ENCODE measurements at regions of chr4 and their contacts with region 1.

Region 1: GRCh38 chr4:168831919-168832762 is 177.9 kb downstream of the CBR4 start:
- DNase-seq: peak; percentile 66 to 80
- ATAC-seq: peak; percentile 82 to 90 (median 88)
- H3K4me3 ChIP-seq: peak overlapping the region; percentile 55 to 85 (median 78)
- H3K27ac ChIP-seq: peak overlapping the region; percentile 82 to 92 (median 90)
- H3K4me1 ChIP-seq: peaks cover 5 to 61% (median 45%) of the 10 kb centered on the region in 9 donors
- H3K27me3 ChIP-seq: peaks cover 0 to 51% (median 0%) of the 10 kb centered on the region in 7 donors
- CTCF ChIP-seq: no peak

Region 2: DNA sequence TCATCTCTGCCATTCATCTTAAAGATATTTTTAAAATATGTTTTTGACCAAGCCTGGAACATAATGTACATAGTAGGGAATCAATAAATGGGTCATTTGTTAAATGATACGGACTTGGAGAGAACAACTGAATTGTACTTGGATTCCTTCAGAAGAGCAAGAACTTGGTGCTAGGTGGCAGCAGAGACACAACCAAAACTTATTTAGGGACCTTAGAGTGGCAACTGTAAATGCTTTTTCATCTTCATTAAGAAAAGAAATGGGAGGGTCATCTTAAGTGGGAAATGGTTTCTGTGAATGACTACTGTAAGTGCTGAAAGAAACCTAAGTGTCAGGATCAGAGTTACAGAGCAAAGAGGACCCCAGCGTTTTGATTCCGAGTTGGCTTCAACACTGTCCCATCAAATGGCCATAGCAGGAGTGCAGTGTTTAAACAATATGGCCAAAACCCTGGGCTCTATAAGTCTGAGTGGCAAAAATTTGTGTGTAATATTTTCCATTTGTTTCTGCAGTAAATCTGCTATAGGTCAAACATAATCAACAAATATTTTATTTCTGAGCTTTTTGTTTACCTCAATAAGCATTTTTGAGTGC is 121.7 kb before region 1 on chr4:
- intact Hi-C with region 1: loop called in 2 of 10 experiments (anchors 2 to 10 kb)
- DNase-seq: peak in 1 of 2 donors; percentile 36
- ATAC-seq: peak in 7 of 8 donors; percentile 49 to 78 (median 65)
- H3K4me3 ChIP-seq: no peak overlapping the region
- H3K27ac ChIP-seq: peak overlapping the region in 6 of 10 donors; percentile 44 to 77 (median 62)
- H3K4me1 ChIP-seq: peaks cover 8 to 30% (median 22%) of the 10 kb centered on the region in 9 donors
- H3K27me3 ChIP-seq: no peaks in the 10 kb centered on the region
- CTCF ChIP-seq: peak; percentile 30 to 76 (median 61)

Region 3: GRCh38 chr4:168717847-168718246 is 114.3 kb before region 1 on chr4:
- intact Hi-C with region 1: loop called in 2 of 10 experiments (anchors 2 to 10 kb)
- DNase-seq: peak in 1 of 2 donors; percentile 42
- ATAC-seq: peak; percentile 70 to 93 (median 86)
- H3K4me3 ChIP-seq: no peak overlapping the region
- H3K27ac ChIP-seq: peak overlapping the region in 9 of 10 donors; percentile 7 to 79 (median 61)
- H3K4me1 ChIP-seq: peaks cover 0 to 45% (median 31%) of the 10 kb centered on the region in 9 donors
- H3K27me3 ChIP-seq: no peaks in the 10 kb centered on the region
- CTCF ChIP-seq: no peak

Region 4: DNA sequence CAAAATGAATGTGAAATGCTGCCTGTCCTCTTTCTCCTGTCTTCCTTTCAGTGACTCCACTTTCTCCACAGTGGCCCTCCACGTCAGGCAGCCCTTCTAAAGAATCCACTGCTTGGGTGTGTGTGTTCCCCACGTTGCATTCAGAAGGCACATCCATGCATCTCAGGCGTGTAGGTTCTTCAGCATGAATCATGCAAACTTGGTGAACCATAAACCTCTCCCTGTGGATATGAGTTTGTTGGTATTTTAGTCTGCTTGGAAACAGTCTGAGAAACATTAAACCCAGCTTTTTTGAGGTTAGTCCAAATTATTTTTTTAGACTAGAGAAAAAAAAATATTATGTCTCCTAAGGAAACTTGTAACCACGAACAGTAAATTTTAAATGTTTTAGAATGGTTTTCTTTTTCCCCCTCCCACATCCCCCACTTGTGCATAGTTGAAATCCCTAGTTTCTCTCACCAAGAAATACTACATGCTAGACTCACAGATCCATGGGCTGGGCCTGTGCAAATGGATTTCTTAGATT is 73.7 kb before region 1 on chr4:
- intact Hi-C with region 1: no loop called
- DNase-seq: no peak
- ATAC-seq: peak in 1 of 8 donors; percentile 7
- H3K4me3 ChIP-seq: no peak overlapping the region
- H3K27ac ChIP-seq: peak overlapping the region in 4 of 10 donors; percentile 20 to 62 (median 26)
- H3K4me1 ChIP-seq: peaks cover 0 to 15% (median 6%) of the 10 kb centered on the region in 9 donors
- H3K27me3 ChIP-seq: no peaks in the 10 kb centered on the region
- CTCF ChIP-seq: no peak

Region 5: GRCh38 chr4:168815379-168816345 is 16.5 kb before region 1 on chr4:
- intact Hi-C with region 1: loop called in 1 of 10 experiments (anchors 1 kb)
- DNase-seq: no peak
- ATAC-seq: peak in 1 of 8 donors; percentile 36
- H3K4me3 ChIP-seq: no peak overlapping the region
- H3K27ac ChIP-seq: peak overlapping the region; percentile 2 to 87 (median 78)
- H3K4me1 ChIP-seq: peaks cover 0 to 64% (median 34%) of the 10 kb centered on the region in 9 donors
- H3K27me3 ChIP-seq: no peaks in the 10 kb centered on the region
- CTCF ChIP-seq: no peak

Region 6: GRCh38 chr4:168864821-168865541 is 32.8 kb after region 1 on chr4:
- intact Hi-C with region 1: loop called in 1 of 10 experiments (anchors 5 kb)
- DNase-seq: no peak
- ATAC-seq: peak in 3 of 8 donors; percentile 22 to 44 (median 41)
- H3K4me3 ChIP-seq: no peak overlapping the region
- H3K27ac ChIP-seq: peak overlapping the region in 3 of 10 donors; percentile 12 to 32 (median 28)
- H3K4me1 ChIP-seq: peaks cover 0 to 86% (median 49%) of the 10 kb centered on the region in 9 donors
- H3K27me3 ChIP-seq: no peaks in the 10 kb centered on the region
- CTCF ChIP-seq: peak in 5 of 9 donors; percentile 18 to 51 (median 39)

Region 7: DNA sequence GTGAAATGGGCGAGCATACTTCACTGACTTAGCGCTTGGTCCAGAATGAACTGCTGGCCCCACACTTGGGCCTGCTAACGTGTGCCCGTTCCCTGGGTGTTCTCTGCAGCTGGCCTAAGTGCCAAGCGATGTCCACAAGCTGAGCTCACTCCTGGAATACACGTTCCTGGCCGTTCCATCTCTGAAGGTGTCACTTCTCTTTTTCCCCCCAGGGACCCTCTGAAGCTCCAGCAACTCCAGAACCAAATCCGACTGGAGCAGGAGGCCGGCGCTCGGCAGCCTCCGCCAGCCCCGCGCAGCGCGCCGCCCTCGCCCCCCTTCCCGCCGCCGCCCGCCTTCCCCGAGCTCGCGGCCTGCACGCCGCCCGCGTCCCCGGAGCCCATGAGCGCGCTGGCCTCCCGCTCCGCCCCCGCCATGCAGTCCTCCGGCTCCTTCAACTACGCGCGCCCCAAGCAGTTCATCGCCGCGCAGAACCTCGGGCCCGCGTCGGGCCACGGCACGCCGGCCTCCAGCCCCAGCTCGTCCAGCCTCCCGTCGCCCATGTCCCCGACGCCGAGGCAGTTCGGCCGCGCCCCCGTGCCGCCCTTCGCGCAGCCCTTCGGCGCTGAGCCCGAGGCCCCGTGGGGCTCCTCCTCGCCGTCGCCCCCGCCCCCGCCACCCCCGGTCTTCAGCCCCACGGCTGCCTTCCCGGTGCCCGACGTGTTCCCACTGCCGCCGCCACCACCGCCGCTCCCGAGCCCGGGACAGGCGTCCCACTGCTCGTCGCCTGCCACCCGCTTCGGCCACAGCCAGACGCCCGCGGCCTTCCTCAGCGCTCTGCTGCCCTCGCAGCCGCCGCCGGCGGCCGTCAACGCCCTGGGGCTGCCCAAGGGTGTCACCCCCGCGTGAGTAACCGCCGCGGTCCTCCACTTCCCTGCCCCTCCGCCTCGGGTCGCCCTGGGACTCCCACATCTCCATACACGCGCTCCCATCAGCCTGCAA is 45.7 kb after region 1 on chr4:
- intact Hi-C with region 1: loop called in 1 of 10 experiments (anchors 5 kb)
- DNase-seq: peak; percentile 36 to 64
- ATAC-seq: peak; percentile 54 to 91 (median 62)
- H3K4me3 ChIP-seq: peak overlapping the region in 9 of 10 donors; percentile 31 to 58 (median 49)
- H3K27ac ChIP-seq: peak overlapping the region; percentile 33 to 81 (median 68)
- H3K4me1 ChIP-seq: peaks cover 0 to 67% (median 46%) of the 10 kb centered on the region in 9 donors
- H3K27me3 ChIP-seq: peaks cover 0 to 25% (median 0%) of the 10 kb centered on the region in 7 donors
- CTCF ChIP-seq: peak in 1 of 9 donors; percentile 13

Region 8: GRCh38 chr4:168917138-168917779 is 85.1 kb after region 1 on chr4:
- intact Hi-C with region 1: loop called in 2 of 10 experiments (anchors 5 to 10 kb)
- DNase-seq: no peak
- ATAC-seq: peak in 1 of 8 donors; percentile 28
- H3K4me3 ChIP-seq: no peak overlapping the region
- H3K27ac ChIP-seq: peak overlapping the region in 1 of 10 donors; percentile 20
- H3K4me1 ChIP-seq: peaks cover 0 to 28% (median 7%) of the 10 kb centered on the region in 9 donors
- H3K27me3 ChIP-seq: no peaks in the 10 kb centered on the region
- CTCF ChIP-seq: peak; percentile 16 to 75 (median 67)

Region 9: DNA sequence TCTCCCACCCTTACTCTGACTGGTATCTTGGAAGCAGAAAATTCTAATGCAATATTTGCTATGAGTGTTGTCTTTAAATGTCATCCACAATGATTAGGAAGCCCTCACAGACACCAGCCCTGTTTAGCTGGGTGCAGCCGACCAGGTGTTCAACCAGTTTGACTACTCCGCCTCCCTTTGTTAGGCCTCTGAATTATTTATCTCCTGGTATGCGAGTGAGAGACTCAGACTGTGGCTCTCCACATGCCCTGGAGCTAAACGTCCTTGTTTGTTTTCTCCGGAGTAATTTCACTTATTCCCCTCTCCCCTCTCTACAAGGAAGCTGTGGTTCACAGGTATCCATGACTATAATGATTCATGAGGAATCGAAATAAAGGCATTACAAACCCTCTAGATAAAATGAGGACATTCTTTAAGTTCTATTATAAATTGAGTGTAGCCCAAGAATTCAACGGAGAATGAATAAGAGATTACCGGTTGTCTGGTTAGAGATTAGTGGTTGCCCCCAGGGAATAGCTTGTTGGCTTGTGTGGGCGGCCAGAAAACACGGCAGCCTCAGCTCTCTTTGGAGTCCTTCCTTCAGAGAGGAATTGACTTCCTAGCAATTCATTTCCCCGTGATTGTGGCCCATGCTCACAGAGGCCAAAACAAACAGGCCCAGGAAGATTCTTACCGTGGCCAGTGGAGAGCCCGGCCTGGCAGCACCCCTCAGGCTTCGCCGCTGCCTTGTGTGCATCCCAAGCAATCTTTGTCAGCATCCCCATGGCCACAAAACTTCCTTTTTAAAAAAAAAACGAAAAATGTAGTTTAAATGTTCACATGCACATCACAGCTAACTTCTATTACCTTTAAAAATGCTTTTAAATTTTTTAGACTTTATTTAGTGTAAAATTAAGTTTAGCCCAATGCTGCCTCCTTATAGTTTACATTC is 238.1 kb after region 1 on chr4:
- intact Hi-C with region 1: no loop called
- DNase-seq: peak; percentile 51 to 63
- ATAC-seq: peak; percentile 53 to 85 (median 75)
- H3K4me3 ChIP-seq: no peak overlapping the region
- H3K27ac ChIP-seq: peak overlapping the region; percentile 3 to 71 (median 37)
- H3K4me1 ChIP-seq: peaks cover 0 to 23% (median 12%) of the 10 kb centered on the region in 9 donors
- H3K27me3 ChIP-seq: no peaks in the 10 kb centered on the region
- CTCF ChIP-seq: no peak

Measured in heart right ventricle (tissue), 16 donors.